ENCODE measurements at regions of chr17 and their contacts with region 1.

Region 1: GRCh38 chr17:40113110-40113906 is 8.5 kb upstream of the MSL1 start:
- DNase-seq: peak; percentile 77 to 96 (median 93)
- ATAC-seq: peak; percentile 80 to 84
- H3K4me3 Mint-ChIP-seq: peak overlapping the region; percentile 80 to 95 (median 86)
- H3K27ac Mint-ChIP-seq: peak overlapping the region; percentile 84 to 100 (median 97)
- H3K4me1 Mint-ChIP-seq: peaks cover 43 to 65% (median 58%) of the 10 kb centered on the region in 4 donors
- H3K27me3 Mint-ChIP-seq: no peaks in the 10 kb centered on the region

Region 2: DNA sequence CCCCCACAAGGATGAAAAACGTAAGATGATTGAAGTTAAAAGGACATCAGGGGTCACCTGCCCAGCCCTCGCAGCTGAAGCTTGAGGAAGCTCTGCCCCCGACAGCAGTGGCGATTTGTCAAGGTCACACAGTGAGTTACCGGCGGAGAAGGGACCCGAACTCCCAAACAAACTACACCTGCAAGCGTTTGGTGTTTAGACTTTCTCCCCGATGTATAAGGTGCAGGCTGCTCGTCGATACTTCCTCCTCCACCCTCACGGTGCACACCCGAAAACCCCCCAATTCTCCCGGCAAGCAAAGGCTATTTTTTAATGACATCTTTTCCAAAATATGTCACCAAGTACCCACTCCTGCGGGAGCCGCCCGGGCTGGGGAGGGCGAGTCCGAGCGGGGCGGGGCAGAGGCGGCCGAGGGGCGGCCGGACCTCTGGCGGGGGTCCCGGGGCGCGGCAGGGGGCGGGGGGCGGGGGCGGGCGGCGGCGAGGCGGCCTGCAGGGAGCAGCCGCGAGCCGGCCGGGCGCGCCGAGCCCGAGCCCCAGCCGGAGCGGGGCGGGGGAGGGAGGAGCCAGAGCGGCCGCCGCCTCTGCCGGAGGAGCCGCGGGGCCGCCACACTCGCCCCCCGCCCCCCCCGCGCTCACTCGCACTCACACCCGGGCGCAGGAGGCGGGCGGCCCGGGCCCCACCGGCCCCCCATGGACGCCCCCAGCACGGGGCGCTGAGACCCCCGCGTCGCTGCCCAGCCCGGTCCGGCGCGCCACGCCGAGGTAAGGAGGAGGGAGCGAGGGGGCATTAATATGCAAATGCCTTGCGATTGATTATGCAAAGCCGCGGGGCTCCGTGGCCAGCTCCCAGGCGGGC is 50.8 kb before region 1 on chr17 and contains the start of gene THRA:
- POLR2A ChIA-PET with region 1: interaction called, 260 read pairs
- DNase-seq: peak; percentile 60 to 80 (median 72)
- ATAC-seq: peak; percentile 85 to 86
- H3K4me3 Mint-ChIP-seq: peak within 1 kb of the TSS; percentile 88 to 99 (median 92)
- H3K27ac Mint-ChIP-seq: peak within 1 kb of the TSS; percentile 88 to 96 (median 92)
- H3K4me1 Mint-ChIP-seq: peaks cover 36 to 53% (median 48%) of the 10 kb centered on the region in 4 donors
- H3K27me3 Mint-ChIP-seq: no peaks in the 10 kb centered on the region
- polyA plus RNA-seq, gene THRA: 11.3 to 23.3 (median 22.2) TPM

Region 3: DNA sequence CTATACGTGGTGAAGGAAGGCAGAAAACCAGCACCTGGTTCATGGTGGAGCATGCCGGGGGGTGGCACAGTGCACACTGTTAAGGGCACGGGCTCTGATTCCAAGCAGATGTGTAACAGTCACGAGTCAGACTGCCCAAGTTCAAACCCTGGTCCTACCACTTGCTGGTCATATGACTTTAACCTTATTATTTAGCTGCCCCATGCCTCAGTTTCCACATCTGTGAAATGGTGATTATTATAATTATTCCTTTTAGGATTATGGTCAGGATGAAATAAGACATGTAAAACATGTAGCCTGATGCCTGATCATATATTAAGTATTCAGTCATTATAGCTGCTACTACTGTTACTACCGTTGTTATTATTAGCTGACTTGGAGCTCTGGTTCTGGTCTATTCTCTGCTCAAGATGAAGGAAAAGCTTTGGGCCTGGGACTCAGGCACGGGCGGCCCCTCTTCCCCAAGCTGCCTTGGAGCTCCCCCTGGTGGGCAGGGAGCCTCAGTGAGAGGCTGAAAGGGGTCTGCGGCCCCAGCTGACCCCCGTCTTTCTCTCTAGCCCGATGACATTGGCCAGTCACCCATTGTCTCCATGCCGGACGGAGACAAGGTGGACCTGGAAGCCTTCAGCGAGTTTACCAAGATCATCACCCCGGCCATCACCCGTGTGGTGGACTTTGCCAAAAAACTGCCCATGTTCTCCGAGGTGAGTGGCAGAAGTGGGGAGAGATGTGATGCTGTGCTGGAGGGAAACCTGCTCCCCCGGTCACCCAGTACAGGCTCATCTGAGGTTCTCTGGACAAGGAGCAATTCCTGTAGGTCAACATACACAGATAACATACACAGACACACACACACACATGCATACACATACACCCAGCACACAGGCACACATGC is 26.9 kb before region 1 on chr17:
- POLR2A ChIA-PET with region 1: interaction called, 523 read pairs
- DNase-seq: peak; percentile 44 to 82 (median 64)
- ATAC-seq: peak; percentile 70 to 86
- H3K4me3 Mint-ChIP-seq: peak overlapping the region in 1 of 10 donors; percentile 10
- H3K27ac Mint-ChIP-seq: peak overlapping the region in 6 of 10 donors; percentile 13 to 89 (median 46)
- H3K4me1 Mint-ChIP-seq: peaks cover 9 to 34% (median 19%) of the 10 kb centered on the region in 4 donors
- H3K27me3 Mint-ChIP-seq: no peaks in the 10 kb centered on the region

Region 4: DNA sequence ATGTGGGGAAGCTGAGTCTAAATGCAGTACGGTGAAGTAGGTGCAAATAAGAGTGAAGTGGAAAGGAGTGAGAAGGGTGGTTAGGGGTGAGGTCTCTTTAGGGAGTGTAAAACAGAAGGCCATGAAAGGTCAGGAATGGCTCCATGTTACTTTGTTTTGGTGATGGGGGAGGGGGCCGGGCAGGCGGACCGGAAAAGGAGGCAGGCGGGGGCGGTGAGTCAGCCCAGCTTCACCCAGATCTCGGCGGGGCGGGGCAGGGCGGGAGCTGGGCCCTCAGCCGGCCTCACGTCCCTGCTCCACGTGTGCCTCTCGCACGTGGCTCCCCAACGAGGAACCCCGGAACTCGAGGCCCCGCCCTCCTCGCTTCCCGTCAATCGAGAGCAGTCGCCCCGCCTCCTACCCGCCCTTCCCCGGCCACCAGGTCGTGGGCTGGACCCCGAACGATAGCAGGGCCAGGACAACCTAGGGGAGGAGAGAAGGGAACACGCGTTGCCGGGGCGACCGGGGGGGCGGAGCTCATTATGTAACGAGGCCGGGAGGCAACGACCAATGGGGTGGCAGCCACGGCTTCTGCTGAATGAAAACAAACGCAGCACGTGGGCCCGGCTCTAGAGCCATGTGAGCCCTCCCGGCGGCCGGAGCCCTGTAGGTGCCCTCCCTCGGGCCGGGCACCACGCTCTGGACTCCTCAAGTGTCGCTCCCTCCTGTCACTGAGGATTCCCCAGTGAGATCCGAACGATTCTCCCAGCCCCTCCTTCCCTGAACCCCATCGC is 14.3 kb before region 1 on chr17:
- POLR2A ChIA-PET with region 1: interaction called, 523 read pairs
- DNase-seq: peak; percentile 92 to 100 (median 98)
- ATAC-seq: peak; percentile 57 to 70
- H3K4me3 Mint-ChIP-seq: peak overlapping the region; percentile 86 to 98 (median 98)
- H3K27ac Mint-ChIP-seq: peak overlapping the region; percentile 82 to 99 (median 96)
- H3K4me1 Mint-ChIP-seq: peaks cover 55 to 98% (median 90%) of the 10 kb centered on the region in 4 donors
- H3K27me3 Mint-ChIP-seq: no peaks in the 10 kb centered on the region

Region 5: DNA sequence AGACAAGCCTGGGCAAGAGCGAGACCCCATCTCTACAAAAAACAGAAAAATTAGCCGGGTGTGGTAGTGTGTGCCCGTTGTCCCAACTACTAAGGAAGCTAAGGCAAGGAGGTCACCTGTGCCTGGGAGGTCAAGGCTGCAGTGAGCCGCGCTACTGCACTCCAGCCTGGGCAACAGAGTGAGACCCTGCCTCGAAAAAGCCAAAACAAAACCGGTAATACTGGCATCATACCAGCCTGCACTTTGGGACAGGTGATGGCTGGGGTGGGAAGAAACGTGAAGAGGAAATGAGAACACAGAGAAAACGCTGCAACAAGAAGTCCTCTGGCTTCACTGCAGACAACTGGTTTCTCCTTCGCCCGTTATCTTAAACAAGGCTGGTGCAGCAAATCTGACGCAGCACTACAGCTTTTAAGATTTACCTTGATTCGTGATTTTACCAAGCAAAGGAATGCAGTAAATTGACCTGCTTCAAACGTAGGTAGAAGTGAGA is 26.3 kb after region 1 on chr17:
- POLR2A ChIA-PET with region 1: interaction called, 98 read pairs
- DNase-seq: peak in 1 of 10 donors; percentile 11
- ATAC-seq: peak in 1 of 2 donors; percentile 26
- H3K4me3 Mint-ChIP-seq: peak overlapping the region; percentile 86 to 98 (median 95)
- H3K27ac Mint-ChIP-seq: peak overlapping the region; percentile 95 to 100 (median 99)
- H3K4me1 Mint-ChIP-seq: peaks cover 14 to 51% (median 41%) of the 10 kb centered on the region in 4 donors
- H3K27me3 Mint-ChIP-seq: peaks cover 0 to 1% (median 0%) of the 10 kb centered on the region in 5 donors

Region 6: GRCh38 chr17:40168262-40168832 is 55.0 kb after region 1 on chr17:
- POLR2A ChIA-PET with region 1: interaction called, 45 read pairs
- DNase-seq: peak in 8 of 10 donors; percentile 22 to 70 (median 54)
- ATAC-seq: peak; percentile 78
- H3K4me3 Mint-ChIP-seq: no peak overlapping the region
- H3K27ac Mint-ChIP-seq: peak overlapping the region; percentile 42 to 95 (median 86)
- H3K4me1 Mint-ChIP-seq: peaks cover 7 to 17% (median 9%) of the 10 kb centered on the region in 4 donors
- H3K27me3 Mint-ChIP-seq: no peaks in the 10 kb centered on the region

Region 7: GRCh38 chr17:40191237-40192208 is 78.2 kb after region 1 on chr17:
- POLR2A ChIA-PET with region 1: interaction called, 21 read pairs
- DNase-seq: peak; percentile 37 to 76 (median 54)
- ATAC-seq: peak; percentile 78 to 85
- H3K4me3 Mint-ChIP-seq: peak overlapping the region; percentile 89 to 98 (median 94)
- H3K27ac Mint-ChIP-seq: peak overlapping the region in 6 of 10 donors; percentile 17 to 81 (median 66)
- H3K4me1 Mint-ChIP-seq: peaks cover 8 to 14% (median 12%) of the 10 kb centered on the region in 4 donors
- H3K27me3 Mint-ChIP-seq: no peaks in the 10 kb centered on the region

Measured in naive thymus-derived CD8-positive, alpha-beta T cell (primary cell).